Activated CD8-positive, alpha-beta T cell treated with anti-CD3 and anti-CD28 coated beads, Interleukin-2, amount 10 ng/mL, durations not matched to agents 7 days and 5 days (primary cell): ENCODE measurements at regions of chr6 and their contacts with region 1.

Region 1: GRCh38 chr6:157527471-157527907 is 146.5 kb downstream of the ZDHHC14 start:
- DNase-seq: peak; percentile 76
- ATAC-seq: peak; percentile 94
- H3K4me3 Mint-ChIP-seq: peak overlapping the region; percentile 4
- H3K27ac Mint-ChIP-seq: peak overlapping the region; percentile 81
- H3K4me1 Mint-ChIP-seq: peaks cover 53% of the 10 kb centered on the region
- H3K27me3 Mint-ChIP-seq: no peaks in the 10 kb centered on the region

Region 2: DNA sequence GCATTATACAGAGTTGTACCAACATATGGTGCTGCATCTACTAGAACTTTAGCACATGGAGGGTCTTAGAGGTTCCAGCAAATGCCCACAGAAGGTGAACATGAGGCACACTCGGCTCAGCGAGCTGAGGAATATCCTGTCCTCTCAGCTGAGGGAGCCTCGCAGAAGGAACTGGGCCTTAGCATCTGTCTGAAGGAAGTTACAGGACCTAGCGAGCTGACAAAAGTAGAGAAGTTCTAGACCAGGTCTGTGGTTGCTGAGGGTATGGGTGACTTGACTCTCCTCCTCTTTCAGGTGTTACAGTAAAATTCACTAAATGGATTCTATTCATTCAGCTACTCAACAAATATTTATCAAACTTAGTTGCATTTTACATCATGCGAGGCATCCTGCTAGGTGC is 10.7 kb after region 1 on chr6:
- CTCF ChIA-PET with region 1: interaction called, 9 read pairs
- POLR2A ChIA-PET with region 1: interaction called, 12 read pairs
- DNase-seq: no peak
- ATAC-seq: no peak
- H3K4me3 Mint-ChIP-seq: no peak overlapping the region
- H3K27ac Mint-ChIP-seq: peak overlapping the region; percentile 55
- H3K4me1 Mint-ChIP-seq: peaks cover 59% of the 10 kb centered on the region
- H3K27me3 Mint-ChIP-seq: no peaks in the 10 kb centered on the region

Region 3: GRCh38 chr6:157571269-157571668 is 43.8 kb after region 1 on chr6:
- CTCF ChIA-PET with region 1: interaction called, 17 read pairs
- POLR2A ChIA-PET with region 1: no interaction called
- DNase-seq: no peak
- ATAC-seq: no peak
- H3K4me3 Mint-ChIP-seq: no peak overlapping the region
- H3K27ac Mint-ChIP-seq: no peak overlapping the region
- H3K4me1 Mint-ChIP-seq: peaks cover 58% of the 10 kb centered on the region
- H3K27me3 Mint-ChIP-seq: no peaks in the 10 kb centered on the region

Region 4: GRCh38 chr6:157614026-157614568 is 86.6 kb after region 1 on chr6:
- CTCF ChIA-PET with region 1: no interaction called
- POLR2A ChIA-PET with region 1: no interaction called
- DNase-seq: no peak
- ATAC-seq: no peak
- H3K4me3 Mint-ChIP-seq: no peak overlapping the region
- H3K27ac Mint-ChIP-seq: no peak overlapping the region
- H3K4me1 Mint-ChIP-seq: no peaks in the 10 kb centered on the region
- H3K27me3 Mint-ChIP-seq: no peaks in the 10 kb centered on the region